CD14-positive monocyte (primary cell): ENCODE measurements at regions of chr21 and their contacts with region 1.

Region 1: GRCh38 chr21:44338971-44339910 is at the start of gene CFAP410:
- DNase-seq: peak; percentile 95 to 96 (median 95)
- H3K4me3 ChIP-seq: peak within 1 kb of the TSS; percentile 61 to 91 (median 65)
- H3K4me3 Mint-ChIP-seq: peak within 1 kb of the TSS; percentile 82 to 94
- H3K27ac ChIP-seq: peak within 1 kb of the TSS; percentile 86 to 97
- H3K27ac Mint-ChIP-seq: peak within 1 kb of the TSS; percentile 95 to 99 (median 96)
- H3K4me1 ChIP-seq: peaks cover 10 to 18% of the 10 kb centered on the region in 2 donors
- H3K4me1 Mint-ChIP-seq: peaks cover 15% of the 10 kb centered on the region
- H3K27me3 ChIP-seq: no peaks in the 10 kb centered on the region
- H3K27me3 Mint-ChIP-seq: peaks cover 4 to 10% (median 5%) of the 10 kb centered on the region in 3 donors
- CTCF ChIP-seq: no peak
- polyA plus RNA-seq, gene CFAP410: 14.8 to 23.5 (median 17.3) TPM

Region 2: GRCh38 chr21:43789276-43790009 is 549.8 kb before region 1 on chr21 and contains the start of gene RRP1:
- intact Hi-C with region 1: loop called in 1 of 2 experiments (anchors 10 kb)
- DNase-seq: peak; percentile 83 to 90 (median 86)
- H3K4me3 ChIP-seq: peak within 1 kb of the TSS; percentile 66 to 80 (median 66)
- H3K4me3 Mint-ChIP-seq: peak within 1 kb of the TSS; percentile 86 to 91
- H3K27ac ChIP-seq: peak within 1 kb of the TSS; percentile 71 to 82
- H3K27ac Mint-ChIP-seq: peak within 1 kb of the TSS; percentile 81 to 95 (median 89)
- H3K4me1 ChIP-seq: peaks cover 19 to 21% of the 10 kb centered on the region in 2 donors
- H3K4me1 Mint-ChIP-seq: peaks cover 18% of the 10 kb centered on the region
- H3K27me3 ChIP-seq: no peaks in the 10 kb centered on the region
- H3K27me3 Mint-ChIP-seq: peaks cover 0 to 4% (median 2%) of the 10 kb centered on the region in 3 donors
- CTCF ChIP-seq: peak; percentile 99
- polyA plus RNA-seq, gene RRP1: 2.7 to 5.7 (median 4.6) TPM

Region 3: GRCh38 chr21:44353191-44353970 is 14.1 kb after region 1 on chr21 and contains the start of gene TRPM2:
- intact Hi-C with region 1: loop called in 1 of 2 experiments (anchors 2 kb)
- DNase-seq: peak; percentile 79 to 88 (median 85)
- H3K4me3 ChIP-seq: peak within 1 kb of the TSS; percentile 23 to 77 (median 45)
- H3K4me3 Mint-ChIP-seq: peak within 1 kb of the TSS; percentile 83 to 91
- H3K27ac ChIP-seq: peak within 1 kb of the TSS; percentile 97 to 99
- H3K27ac Mint-ChIP-seq: peak within 1 kb of the TSS; percentile 91 to 99 (median 98)
- H3K4me1 ChIP-seq: peaks cover 70 to 90% of the 10 kb centered on the region in 2 donors
- H3K4me1 Mint-ChIP-seq: peaks cover 68% of the 10 kb centered on the region
- H3K27me3 ChIP-seq: peaks cover 4 to 15% of the 10 kb centered on the region in 2 donors
- H3K27me3 Mint-ChIP-seq: peaks cover 15 to 29% (median 22%) of the 10 kb centered on the region in 3 donors
- CTCF ChIP-seq: no peak
- polyA plus RNA-seq, gene TRPM2: 7.6 to 21.6 (median 12.2) TPM

Region 4: GRCh38 chr21:44379991-44380908 is 41.0 kb after region 1 on chr21:
- intact Hi-C with region 1: loop called in 1 of 2 experiments (anchors 10 kb)
- DNase-seq: peak in 1 of 3 donors; percentile 2
- H3K4me3 ChIP-seq: no peak overlapping the region
- H3K4me3 Mint-ChIP-seq: no peak overlapping the region
- H3K27ac ChIP-seq: no peak overlapping the region
- H3K27ac Mint-ChIP-seq: no peak overlapping the region
- H3K4me1 ChIP-seq: peaks cover 9 to 11% of the 10 kb centered on the region in 2 donors
- H3K4me1 Mint-ChIP-seq: peaks cover 14% of the 10 kb centered on the region
- H3K27me3 ChIP-seq: no peaks in the 10 kb centered on the region
- H3K27me3 Mint-ChIP-seq: peaks cover 0 to 14% (median 2%) of the 10 kb centered on the region in 3 donors
- CTCF ChIP-seq: no peak

Region 5: DNA sequence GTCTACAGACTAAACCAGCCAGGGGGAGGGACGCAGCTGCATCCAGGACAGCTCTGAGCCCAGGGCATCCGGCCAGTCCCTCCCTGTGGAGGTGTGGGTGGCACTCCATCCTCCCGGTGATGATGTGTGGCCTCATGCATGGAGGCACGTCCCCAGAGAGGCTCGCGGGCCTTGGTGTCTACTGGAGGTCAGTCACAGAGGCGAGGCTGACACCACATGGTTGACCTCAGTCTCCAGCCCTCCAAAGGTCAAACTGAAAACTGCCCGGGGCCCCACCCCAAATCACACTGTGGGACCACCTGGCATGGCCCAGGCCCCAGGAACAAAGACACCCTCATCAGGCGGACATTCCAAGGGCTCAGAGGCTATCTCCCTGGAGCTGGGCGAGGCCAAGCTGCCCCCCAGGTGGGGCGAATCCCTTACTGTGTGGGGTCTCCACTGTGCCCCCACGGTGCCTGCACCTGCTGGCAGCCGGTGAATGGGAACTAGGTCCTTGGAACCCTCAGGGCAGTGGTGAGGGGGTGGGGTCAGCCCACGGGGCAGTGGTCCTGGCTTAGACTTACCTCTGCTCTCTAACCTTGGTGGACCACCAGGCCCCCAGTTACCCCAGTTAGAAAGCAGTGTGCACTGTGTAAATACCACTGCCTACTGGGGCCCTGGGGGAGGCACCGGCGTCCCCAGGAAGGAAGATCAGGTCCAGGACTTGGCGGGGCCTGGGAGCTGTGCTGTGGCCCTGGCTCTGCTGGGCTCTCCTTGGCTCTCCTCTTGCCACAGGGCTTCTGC is 63.3 kb after region 1 on chr21:
- intact Hi-C with region 1: no loop called
- DNase-seq: peak in 1 of 3 donors; percentile 2
- H3K4me3 ChIP-seq: no peak overlapping the region
- H3K4me3 Mint-ChIP-seq: no peak overlapping the region
- H3K27ac ChIP-seq: no peak overlapping the region
- H3K27ac Mint-ChIP-seq: no peak overlapping the region
- H3K4me1 ChIP-seq: no peaks in the 10 kb centered on the region
- H3K4me1 Mint-ChIP-seq: no peaks in the 10 kb centered on the region
- H3K27me3 ChIP-seq: no peaks in the 10 kb centered on the region
- H3K27me3 Mint-ChIP-seq: peaks cover 0 to 4% (median 0%) of the 10 kb centered on the region in 3 donors
- CTCF ChIP-seq: no peak

Region 6: GRCh38 chr21:44444286-44444931 is 105.2 kb after region 1 on chr21:
- intact Hi-C with region 1: no loop called
- DNase-seq: no peak
- H3K4me3 ChIP-seq: no peak overlapping the region
- H3K4me3 Mint-ChIP-seq: no peak overlapping the region
- H3K27ac ChIP-seq: no peak overlapping the region
- H3K27ac Mint-ChIP-seq: peak overlapping the region in 1 of 7 donors; percentile 33
- H3K4me1 ChIP-seq: no peaks in the 10 kb centered on the region
- H3K4me1 Mint-ChIP-seq: peaks cover 2% of the 10 kb centered on the region
- H3K27me3 ChIP-seq: peaks cover 0 to 3% of the 10 kb centered on the region in 2 donors
- H3K27me3 Mint-ChIP-seq: peaks cover 13 to 25% (median 19%) of the 10 kb centered on the region in 3 donors
- CTCF ChIP-seq: no peak

Region 7: GRCh38 chr21:45643021-45643980 is 1304.1 kb after region 1 on chr21 and contains the start of gene PCBP3:
- intact Hi-C with region 1: loop called in 1 of 2 experiments (anchors 5 kb)
- DNase-seq: peak; percentile 92 to 95 (median 93)
- H3K4me3 ChIP-seq: peak within 1 kb of the TSS in 2 of 3 experiments; percentile 46 to 63
- H3K4me3 Mint-ChIP-seq: peak within 1 kb of the TSS; percentile 74 to 87
- H3K27ac ChIP-seq: no peak within 1 kb of the TSS
- H3K27ac Mint-ChIP-seq: peak within 1 kb of the TSS in 1 of 7 donors; percentile 68
- H3K4me1 ChIP-seq: peaks cover 10 to 28% of the 10 kb centered on the region in 2 donors
- H3K4me1 Mint-ChIP-seq: peaks cover 24% of the 10 kb centered on the region
- H3K27me3 ChIP-seq: peaks cover 7 to 18% of the 10 kb centered on the region in 2 donors
- H3K27me3 Mint-ChIP-seq: peaks cover 17 to 26% (median 19%) of the 10 kb centered on the region in 3 donors
- CTCF ChIP-seq: no peak
- polyA plus RNA-seq, gene PCBP3: 0.34 to 0.49 TPM in 2 of 3 donors, not detected in the other